Heart right ventricle (tissue), 16 donors: ENCODE measurements at regions of chr4 and their contacts with region 1.

Region 1: GRCh38 chr4:13476915-13477314 is 7.2 kb downstream of the RAB28 start:
- DNase-seq: no peak
- ATAC-seq: peak in 3 of 8 donors; percentile 17 to 46 (median 33)
- H3K4me3 ChIP-seq: no peak overlapping the region
- H3K27ac ChIP-seq: peak overlapping the region in 5 of 10 donors; percentile 50 to 73 (median 57)
- H3K4me1 ChIP-seq: peaks cover 0 to 43% (median 15%) of the 10 kb centered on the region in 9 donors
- H3K27me3 ChIP-seq: no peaks in the 10 kb centered on the region
- CTCF ChIP-seq: no peak

Region 2: DNA sequence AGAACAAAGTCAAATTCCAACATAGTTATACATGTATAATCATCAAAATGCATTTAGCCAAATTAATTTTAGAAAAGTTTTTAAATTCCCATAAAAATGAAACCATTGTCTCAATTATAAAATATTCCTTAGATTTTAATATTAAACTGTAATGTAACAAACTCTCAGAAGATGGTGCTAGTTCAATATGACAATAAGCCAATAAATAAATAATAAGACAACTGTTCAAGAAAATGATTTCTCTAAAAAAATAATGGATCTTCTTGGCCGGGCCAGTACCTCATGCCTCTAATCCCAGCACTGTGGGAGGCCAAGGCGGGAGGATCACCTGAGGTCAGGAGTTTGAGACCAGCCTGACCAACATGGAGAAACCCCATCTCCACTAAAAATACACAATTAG is 73.1 kb before region 1 on chr4:
- intact Hi-C with region 1: loop called in 1 of 10 experiments (anchors 10 kb)
- DNase-seq: no peak
- ATAC-seq: no peak
- H3K4me3 ChIP-seq: no peak overlapping the region
- H3K27ac ChIP-seq: no peak overlapping the region
- H3K4me1 ChIP-seq: peaks cover 0 to 4% (median 0%) of the 10 kb centered on the region in 9 donors
- H3K27me3 ChIP-seq: no peaks in the 10 kb centered on the region
- CTCF ChIP-seq: no peak

Region 3: GRCh38 chr4:13413729-13414437 is 63.0 kb before region 1 on chr4:
- intact Hi-C with region 1: loop called in 4 of 10 experiments (anchors 10 kb)
- DNase-seq: peak in 1 of 2 donors; percentile 6
- ATAC-seq: peak in 7 of 8 donors; percentile 53 to 89 (median 73)
- H3K4me3 ChIP-seq: peak overlapping the region in 3 of 10 donors; percentile 4 to 10 (median 9)
- H3K27ac ChIP-seq: peak overlapping the region in 8 of 10 donors; percentile 28 to 79 (median 62)
- H3K4me1 ChIP-seq: peaks cover 0 to 47% (median 36%) of the 10 kb centered on the region in 9 donors
- H3K27me3 ChIP-seq: no peaks in the 10 kb centered on the region
- CTCF ChIP-seq: no peak